ENCODE measurements at regions of chr12 and their contacts with region 1.

Region 1: DNA sequence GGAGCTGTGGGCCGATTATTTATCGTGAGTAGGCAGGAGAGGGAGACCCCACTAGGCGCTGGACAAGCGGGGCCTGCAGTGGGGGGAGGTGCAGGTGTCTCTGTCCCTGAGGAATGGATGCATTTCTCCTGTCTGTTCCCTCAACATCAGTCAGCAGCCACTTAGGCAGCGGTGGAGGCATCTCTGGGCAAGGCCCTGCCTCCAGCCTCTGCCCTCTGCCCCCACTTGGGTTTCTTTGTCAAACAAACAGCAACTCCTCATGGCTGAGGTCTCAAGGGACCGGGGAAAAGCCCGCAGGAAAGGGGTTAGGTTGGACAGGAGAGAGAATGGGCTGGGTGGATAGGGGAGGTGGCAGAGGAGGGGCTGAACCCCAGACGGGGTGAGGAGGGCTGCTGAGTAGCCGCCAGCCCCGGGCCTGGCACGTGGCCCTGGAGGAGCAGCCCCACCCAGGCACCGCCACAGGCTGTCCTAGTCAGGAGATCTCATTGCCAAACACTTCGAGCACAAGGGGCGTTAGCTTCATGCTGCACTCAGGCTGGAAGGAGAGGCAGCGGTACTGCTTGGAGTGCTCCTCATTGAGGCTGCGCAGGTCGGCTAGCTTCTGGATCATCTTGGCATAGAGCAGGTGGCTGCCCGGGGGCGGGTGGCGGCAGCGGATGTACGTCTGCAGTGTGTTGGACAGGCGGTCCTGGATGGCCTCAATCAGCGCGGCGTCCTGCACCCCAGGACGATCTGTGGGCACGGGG is 24.7 kb upstream of the HDAC7 start:
- DNase-seq: no peak
- H3K4me3 ChIP-seq: no peak overlapping the region
- H3K27ac ChIP-seq: no peak overlapping the region
- H3K4me1 ChIP-seq: peaks cover 6% of the 10 kb centered on the region
- H3K27me3 ChIP-seq: no peaks in the 10 kb centered on the region
- CTCF ChIP-seq: no peak

Region 2: GRCh38 chr12:47721431-47721973 is 122.9 kb before region 1 on chr12:
- CTCF ChIA-PET with region 1: no interaction called
- dilution Hi-C with region 1: loop called (anchors 5 kb)
- in situ Hi-C with region 1: loop called (anchors 10 kb)
- intact Hi-C with region 1: no loop called
- DNase-seq: no peak
- H3K4me3 ChIP-seq: no peak overlapping the region
- H3K27ac ChIP-seq: no peak overlapping the region
- H3K4me1 ChIP-seq: peaks cover 4% of the 10 kb centered on the region
- H3K27me3 ChIP-seq: no peaks in the 10 kb centered on the region
- CTCF ChIP-seq: no peak